Dendritic cell treated with granulocyte-macrophage colony-stimulating factor and Interleukin-4, amounts not matched to agents 40 ng/mL and 50 ng/mL, for 4 days (primary cell): ENCODE measurements at regions of chr12 and their contacts with region 1.

Region 1: DNA sequence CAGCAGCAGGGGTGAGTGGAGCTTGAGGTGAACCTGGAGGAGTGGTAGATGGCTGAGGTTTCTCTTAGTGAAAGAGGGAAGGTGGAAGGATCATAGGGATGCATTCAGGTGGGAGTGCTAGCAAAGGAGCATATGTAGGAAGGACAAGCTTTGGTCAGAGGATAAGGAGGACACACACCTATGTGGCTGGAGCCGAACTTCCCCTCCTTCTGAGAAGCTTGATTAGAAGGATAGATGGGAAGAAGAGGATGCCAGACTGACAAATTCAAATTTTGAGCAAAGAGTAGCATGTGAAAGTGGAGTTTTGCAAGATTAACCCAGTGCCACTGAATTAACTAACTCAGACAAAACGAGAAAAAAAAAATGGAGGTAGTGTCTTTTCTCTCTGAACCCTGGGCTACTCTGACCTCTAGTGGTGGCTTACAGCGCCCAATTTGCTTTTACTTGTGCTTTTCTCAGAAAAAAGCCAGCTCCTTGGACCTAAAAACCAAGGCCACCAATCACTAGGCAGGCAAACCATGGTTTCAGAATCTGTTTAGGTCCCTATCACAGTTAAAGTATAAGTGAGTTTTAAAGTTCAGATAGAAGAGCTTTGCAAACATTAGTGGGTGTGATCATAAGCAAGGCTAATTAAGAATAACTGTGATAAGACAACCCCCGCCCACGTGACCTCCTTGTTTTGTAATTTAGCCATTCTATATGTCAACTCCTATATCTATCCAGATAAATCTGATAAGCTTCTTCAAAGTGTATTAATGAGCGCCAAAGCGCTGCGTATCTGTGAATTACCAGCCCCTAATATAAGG is 15.5 kb downstream of the EMP1 start:
- H3K4me3 Mint-ChIP-seq: no peak overlapping the region
- H3K27ac Mint-ChIP-seq: peak overlapping the region; percentile 6
- H3K4me1 Mint-ChIP-seq: peaks cover 47% of the 10 kb centered on the region
- H3K27me3 Mint-ChIP-seq: no peaks in the 10 kb centered on the region

Region 2: GRCh38 chr12:12916135-12916944 is 295.7 kb before region 1 on chr12:
- intact Hi-C with region 1: loop called (anchors 1 kb)
- H3K4me3 Mint-ChIP-seq: no peak overlapping the region
- H3K27ac Mint-ChIP-seq: no peak overlapping the region
- H3K4me1 Mint-ChIP-seq: peaks cover 21% of the 10 kb centered on the region
- H3K27me3 Mint-ChIP-seq: peaks cover 6% of the 10 kb centered on the region

Region 3: DNA sequence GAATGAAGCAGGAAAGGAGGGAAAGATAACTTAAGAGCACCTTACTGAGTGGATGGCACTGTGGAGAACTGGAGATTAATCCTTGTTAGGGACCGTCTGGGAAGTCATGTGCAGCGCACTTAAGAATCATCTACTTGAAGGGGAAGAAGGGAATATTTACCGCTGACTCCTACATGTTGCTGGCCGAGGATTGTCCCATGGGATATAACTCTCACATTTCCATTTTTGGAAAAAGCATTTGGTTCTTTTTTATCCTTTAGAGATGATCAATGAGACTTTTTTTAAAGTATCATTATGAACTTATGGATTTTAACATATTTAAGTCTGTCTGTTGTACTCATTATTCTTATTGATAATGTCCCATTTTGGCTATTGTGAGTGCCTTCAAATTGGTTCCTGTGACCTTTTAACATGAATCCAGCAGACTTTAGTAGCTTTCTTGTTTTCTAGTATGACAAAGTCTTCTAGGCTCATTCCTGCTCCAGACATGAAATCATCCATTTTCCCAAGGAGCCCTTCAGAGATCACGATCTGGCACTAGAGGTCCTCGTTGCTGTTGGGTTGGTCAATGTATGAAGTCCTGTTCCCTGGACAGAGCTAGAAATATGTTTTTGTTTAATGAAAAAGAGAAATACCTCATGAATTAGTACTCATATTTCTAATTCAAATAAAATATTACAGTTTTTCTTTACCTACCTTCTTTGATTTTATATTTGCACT is 188.1 kb before region 1 on chr12:
- intact Hi-C with region 1: loop called (anchors 5 kb)
- H3K4me3 Mint-ChIP-seq: no peak overlapping the region
- H3K27ac Mint-ChIP-seq: no peak overlapping the region
- H3K4me1 Mint-ChIP-seq: peaks cover 18% of the 10 kb centered on the region
- H3K27me3 Mint-ChIP-seq: no peaks in the 10 kb centered on the region

Region 4: GRCh38 chr12:13044002-13044905 is 167.8 kb before region 1 on chr12 and contains the start of gene FAM234B:
- intact Hi-C with region 1: loop called (anchors 5 kb)
- H3K4me3 Mint-ChIP-seq: peak within 1 kb of the TSS; percentile 88
- H3K27ac Mint-ChIP-seq: peak within 1 kb of the TSS; percentile 82
- H3K4me1 Mint-ChIP-seq: peaks cover 28% of the 10 kb centered on the region
- H3K27me3 Mint-ChIP-seq: peaks cover 16% of the 10 kb centered on the region

Region 5: GRCh38 chr12:13173012-13173932 is 38.8 kb before region 1 on chr12:
- intact Hi-C with region 1: no loop called
- H3K4me3 Mint-ChIP-seq: no peak overlapping the region
- H3K27ac Mint-ChIP-seq: peak overlapping the region; percentile 65
- H3K4me1 Mint-ChIP-seq: peaks cover 43% of the 10 kb centered on the region
- H3K27me3 Mint-ChIP-seq: peaks cover 15% of the 10 kb centered on the region

Region 6: DNA sequence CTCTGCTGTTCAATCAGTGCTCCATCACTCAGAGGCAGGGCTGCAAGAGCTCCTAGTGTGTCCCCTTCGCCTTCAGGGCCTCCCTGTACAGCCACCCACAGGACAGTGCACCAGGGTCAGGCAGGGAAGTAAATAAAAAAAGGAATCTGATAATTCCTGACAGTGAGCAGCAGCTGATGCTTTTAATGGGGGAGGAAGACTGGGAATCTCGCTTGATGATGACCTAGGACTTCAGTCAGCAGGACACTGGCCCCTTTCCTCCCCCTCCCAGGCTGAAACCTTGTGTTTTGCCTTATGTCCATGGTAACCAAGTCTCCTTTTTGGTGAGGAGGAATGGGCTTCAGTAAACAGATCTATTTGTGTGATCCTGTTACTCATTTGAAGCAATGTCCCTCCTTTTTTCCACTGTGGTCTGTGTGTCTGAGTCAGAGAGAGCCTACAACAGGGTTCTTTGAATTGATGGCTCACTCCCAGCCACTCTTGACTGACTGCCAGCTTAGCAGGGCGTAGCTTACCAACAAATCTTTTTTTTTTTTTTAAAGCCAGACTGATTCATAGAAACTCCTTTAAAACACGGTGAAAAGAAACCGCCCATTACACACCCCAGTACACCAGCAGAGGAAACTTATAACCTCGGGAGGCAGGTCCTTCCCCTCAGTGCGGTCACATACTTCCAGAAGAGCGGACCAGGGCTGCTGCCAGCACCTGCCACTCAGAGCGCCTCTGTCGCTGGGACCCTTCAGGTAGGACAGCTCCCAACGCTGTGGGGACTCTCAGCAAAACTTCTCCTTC is 15.7 kb before region 1 on chr12 and contains the start of gene EMP1:
- intact Hi-C with region 1: loop called (anchors 1 kb)
- H3K4me3 Mint-ChIP-seq: peak within 1 kb of the TSS; percentile 78
- H3K27ac Mint-ChIP-seq: peak within 1 kb of the TSS; percentile 86
- H3K4me1 Mint-ChIP-seq: peaks cover 71% of the 10 kb centered on the region
- H3K27me3 Mint-ChIP-seq: peaks cover 2% of the 10 kb centered on the region